ENCODE measurements at regions of chr10 and their contacts with region 1.

Region 1: DNA sequence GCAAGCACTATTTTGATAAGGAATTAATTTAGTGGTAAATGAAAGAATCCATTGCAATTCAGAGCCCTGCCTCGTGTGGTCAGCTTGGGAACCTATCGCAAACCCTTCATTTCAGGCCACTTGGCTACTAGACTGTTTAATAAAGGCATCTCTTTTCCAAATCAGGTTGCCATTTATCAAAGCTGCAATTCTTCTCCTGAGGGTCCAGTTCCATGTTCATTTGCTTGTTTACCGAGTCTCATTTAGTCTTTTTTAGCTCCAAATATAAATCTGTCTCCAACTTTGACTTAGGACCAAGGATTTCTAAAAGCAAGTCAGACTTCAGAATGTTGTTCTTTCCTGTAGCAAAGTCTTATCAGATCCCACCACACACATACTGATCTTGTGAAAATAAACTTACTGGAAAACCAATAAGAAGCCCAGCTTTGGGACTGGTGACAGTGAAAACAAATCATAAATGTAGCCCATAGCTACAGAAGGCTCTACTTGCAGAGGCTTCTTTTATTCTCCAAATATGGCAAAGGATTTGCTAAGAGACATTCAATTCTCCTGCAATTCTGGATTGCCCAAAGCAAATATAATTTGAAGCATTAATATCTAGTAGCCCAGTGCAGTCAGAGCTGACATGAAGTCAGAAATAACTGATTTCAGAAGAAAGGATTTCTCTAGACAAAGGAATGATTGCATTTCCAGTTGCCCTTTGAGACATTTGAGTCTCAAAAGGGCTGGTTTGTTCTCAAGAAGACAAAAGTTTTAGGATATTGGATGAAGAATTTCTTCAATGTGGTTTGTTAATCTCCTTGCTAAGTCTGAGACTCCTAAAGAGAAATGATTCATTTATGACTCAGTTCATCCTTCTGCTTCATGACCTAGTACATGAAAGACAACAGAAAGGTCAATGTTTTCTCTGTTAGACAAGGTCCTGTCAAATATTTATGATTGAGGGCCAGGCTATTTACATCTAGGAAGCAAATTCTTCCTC is 28.0 kb downstream of the PPP1R3C start:
- DNase-seq: no peak
- H3K4me3 ChIP-seq: no peak overlapping the region
- H3K27ac ChIP-seq: peak overlapping the region; percentile 72 to 83
- H3K4me1 ChIP-seq: peaks cover 0 to 87% (median 52%) of the 10 kb centered on the region in 4 donors
- H3K27me3 ChIP-seq: no peaks in the 10 kb centered on the region
- CTCF ChIP-seq: peak; percentile 11 to 16

Region 2: GRCh38 chr10:91579329-91579985 is 25.4 kb before region 1 on chr10:
- intact Hi-C with region 1: loop called (anchors 1 kb)
- DNase-seq: no peak
- H3K4me3 ChIP-seq: no peak overlapping the region
- H3K27ac ChIP-seq: peak overlapping the region; percentile 52 to 77
- H3K4me1 ChIP-seq: peaks cover 0 to 58% (median 31%) of the 10 kb centered on the region in 4 donors
- H3K27me3 ChIP-seq: no peaks in the 10 kb centered on the region
- CTCF ChIP-seq: no peak

Region 3: GRCh38 chr10:91856637-91857036 is 251.8 kb after region 1 on chr10:
- intact Hi-C with region 1: no loop called
- DNase-seq: no peak
- H3K4me3 ChIP-seq: no peak overlapping the region
- H3K27ac ChIP-seq: no peak overlapping the region
- H3K4me1 ChIP-seq: no peaks in the 10 kb centered on the region
- H3K27me3 ChIP-seq: no peaks in the 10 kb centered on the region
- CTCF ChIP-seq: peak in 1 of 2 experiments; percentile 26

Region 4: DNA sequence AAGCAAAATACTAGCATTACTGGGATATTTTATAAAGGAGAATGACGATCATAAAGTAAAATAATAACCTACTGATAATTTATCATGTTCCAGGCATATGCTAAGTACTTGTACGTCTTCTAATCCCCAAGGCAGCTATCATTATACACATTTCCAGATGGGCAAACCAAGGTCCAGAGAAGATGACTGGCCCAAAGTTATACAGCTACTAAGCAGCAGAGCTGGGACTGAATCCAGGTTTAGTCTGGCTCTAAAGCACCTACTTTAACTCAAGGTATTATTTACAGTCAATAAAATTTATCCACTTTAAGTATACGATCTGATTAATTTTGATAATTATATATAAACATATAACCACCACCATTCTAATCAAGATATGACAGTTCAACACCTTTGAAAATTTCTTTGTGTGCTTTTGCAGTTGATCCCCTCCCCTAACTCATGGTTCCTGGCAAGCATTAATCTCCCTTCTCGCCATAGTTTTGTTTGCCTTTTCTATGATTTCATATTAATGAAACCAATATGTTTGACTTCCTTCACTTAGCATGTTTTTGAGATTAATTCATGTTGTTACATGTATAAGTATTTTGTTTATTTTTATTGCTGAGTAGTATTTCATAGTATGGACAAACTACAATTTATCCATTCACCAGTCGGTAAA is 559.3 kb after region 1 on chr10:
- intact Hi-C with region 1: no loop called
- DNase-seq: no peak
- H3K4me3 ChIP-seq: no peak overlapping the region
- H3K27ac ChIP-seq: no peak overlapping the region
- H3K4me1 ChIP-seq: peaks cover 0 to 3% (median 0%) of the 10 kb centered on the region in 4 donors
- H3K27me3 ChIP-seq: no peaks in the 10 kb centered on the region
- CTCF ChIP-seq: no peak

Measured in tibial artery (tissue), 4 donors.